ENCODE measurements at regions of chr2 and their contacts with region 1.

Region 1: DNA sequence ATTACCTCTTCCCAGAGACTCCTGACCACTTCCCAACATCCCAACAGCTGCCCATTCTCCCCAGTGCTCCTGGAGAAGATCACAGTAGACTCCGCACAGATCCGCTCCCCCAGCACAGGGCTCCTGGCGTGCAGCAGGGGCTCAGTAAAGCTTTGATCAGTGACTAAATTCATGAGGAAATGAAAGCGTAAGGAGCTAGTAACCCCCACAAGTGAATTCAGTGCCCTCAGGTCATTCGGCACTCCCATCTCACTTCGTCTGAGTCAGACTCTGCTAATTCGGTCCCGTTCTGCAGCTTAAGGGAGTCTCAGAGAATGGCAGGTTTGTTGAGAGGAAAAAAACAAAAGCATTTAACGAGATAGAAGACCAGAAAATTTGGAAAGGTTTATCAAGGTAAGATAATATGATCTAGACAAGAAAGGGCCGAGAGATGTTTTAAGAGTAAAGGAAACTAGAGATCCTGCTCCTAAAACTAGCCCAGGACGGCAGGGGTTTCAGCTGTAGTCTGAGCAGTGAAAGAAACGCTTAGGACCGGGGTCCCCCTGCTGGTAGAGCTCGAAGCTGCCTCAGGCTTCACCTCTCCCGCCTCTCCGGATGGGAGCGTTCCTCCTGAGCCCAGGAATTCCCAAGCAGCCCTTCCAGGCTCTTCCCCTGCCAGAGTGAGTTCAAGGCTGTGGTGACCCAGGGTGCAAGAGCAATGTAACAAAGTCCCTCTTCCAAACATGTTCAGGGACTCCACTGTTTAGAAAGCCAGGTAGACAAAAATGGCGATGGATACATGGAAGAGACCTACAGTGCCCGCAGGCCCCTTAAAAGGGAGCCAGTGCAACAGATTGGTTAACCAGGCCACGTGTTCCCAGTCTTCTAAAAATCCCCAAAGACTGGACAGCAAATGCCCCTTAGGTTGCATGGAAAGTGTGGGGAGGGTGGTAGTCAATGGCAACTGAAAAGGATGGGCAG is 127.3 kb downstream of the DNER start:
- DNase-seq: peak; percentile 81
- H3K4me3 ChIP-seq: peak overlapping the region in 1 of 2 experiments; percentile 51; a peak in 2 of 4 replicates
- H3K27ac ChIP-seq: no peak overlapping the region
- H3K4me1 ChIP-seq: peaks cover 0 to 8% of the 10 kb centered on the region in 2 experiments; a peak in 1 of 4 replicates
- H3K27me3 ChIP-seq: no peaks in the 10 kb centered on the region
- CTCF ChIP-seq: peak; percentile 93
- EP300 ChIP-seq: no peak
- RAD21 ChIP-seq: peak; percentile 93

Region 2: GRCh38 chr2:229273723-229274338 is 313.2 kb before region 1 on chr2:
- CTCF ChIA-PET with region 1: interaction called, 11 read pairs
- POLR2A ChIA-PET with region 1: no interaction called
- DNase-seq: peak; percentile 79
- H3K4me3 ChIP-seq: peak overlapping the region; percentile 29 to 47
- H3K27ac ChIP-seq: no peak overlapping the region
- H3K4me1 ChIP-seq: peaks cover 0 to 2% of the 10 kb centered on the region in 2 experiments; a peak in 1 of 4 replicates
- H3K27me3 ChIP-seq: no peaks in the 10 kb centered on the region
- CTCF ChIP-seq: peak; percentile 74
- EP300 ChIP-seq: no peak
- RAD21 ChIP-seq: peak; percentile 87

Region 3: DNA sequence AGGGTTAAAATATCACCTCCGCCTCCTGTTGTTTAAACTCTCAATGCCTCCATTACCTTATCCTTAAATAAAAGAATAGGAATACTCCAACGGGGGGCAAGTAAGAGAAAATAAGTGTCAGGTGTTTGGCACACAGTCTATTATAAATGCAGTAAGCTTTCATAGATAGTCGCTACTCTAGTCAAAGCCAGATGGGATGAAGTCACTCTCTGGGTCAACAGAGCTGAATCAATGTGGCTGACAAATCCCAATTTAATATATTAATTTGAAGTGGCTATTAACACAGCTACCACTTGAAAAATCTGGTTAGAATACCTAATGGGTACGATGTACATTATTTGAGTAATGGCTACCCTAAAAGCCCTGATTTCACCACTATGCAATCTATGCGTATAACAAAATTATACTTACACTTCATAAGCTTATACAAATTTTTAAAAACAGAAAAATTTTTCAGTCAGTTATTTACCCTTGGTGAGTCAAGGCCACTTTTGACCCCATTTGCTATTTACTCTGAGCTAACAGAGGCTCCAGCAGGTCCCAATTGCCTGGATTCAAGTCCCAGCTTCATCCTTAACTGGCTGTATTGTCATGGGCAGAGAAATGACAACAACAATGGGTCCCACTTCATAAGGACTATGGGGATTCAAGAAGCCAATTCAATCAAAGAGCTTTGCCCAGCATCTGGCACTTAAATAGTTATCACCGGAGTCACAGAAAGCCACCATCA is 148.4 kb before region 1 on chr2:
- CTCF ChIA-PET with region 1: interaction called, 40 read pairs
- POLR2A ChIA-PET with region 1: no interaction called
- DNase-seq: no peak
- H3K4me3 ChIP-seq: no peak overlapping the region
- H3K27ac ChIP-seq: no peak overlapping the region
- H3K4me1 ChIP-seq: no peaks in the 10 kb centered on the region
- H3K27me3 ChIP-seq: no peaks in the 10 kb centered on the region
- CTCF ChIP-seq: no peak
- EP300 ChIP-seq: no peak
- RAD21 ChIP-seq: no peak

Region 4: DNA sequence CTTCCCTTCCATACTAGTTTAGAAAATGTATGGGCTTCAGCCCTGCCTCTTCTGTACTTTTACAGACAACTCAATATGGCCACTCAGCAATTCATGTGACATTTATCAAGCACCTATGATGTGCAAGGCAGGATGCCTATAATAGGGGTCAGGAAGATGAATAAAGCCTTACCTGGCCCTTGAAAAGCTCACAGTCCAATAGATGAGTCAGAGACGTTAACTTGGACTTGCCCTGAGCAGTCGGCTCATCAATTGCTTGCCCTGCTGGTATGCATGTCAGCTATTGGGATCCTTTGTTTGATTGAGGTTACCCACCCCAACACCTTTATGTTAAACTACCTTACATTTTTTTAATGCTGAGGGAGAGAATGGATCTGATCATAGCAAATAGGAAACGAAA is 11.2 kb after region 1 on chr2:
- CTCF ChIA-PET with region 1: interaction called, 12 read pairs
- POLR2A ChIA-PET with region 1: no interaction called
- DNase-seq: no peak
- H3K4me3 ChIP-seq: no peak overlapping the region
- H3K27ac ChIP-seq: no peak overlapping the region
- H3K4me1 ChIP-seq: no peaks in the 10 kb centered on the region
- H3K27me3 ChIP-seq: no peaks in the 10 kb centered on the region
- CTCF ChIP-seq: no peak
- EP300 ChIP-seq: no peak
- RAD21 ChIP-seq: no peak

Region 5: DNA sequence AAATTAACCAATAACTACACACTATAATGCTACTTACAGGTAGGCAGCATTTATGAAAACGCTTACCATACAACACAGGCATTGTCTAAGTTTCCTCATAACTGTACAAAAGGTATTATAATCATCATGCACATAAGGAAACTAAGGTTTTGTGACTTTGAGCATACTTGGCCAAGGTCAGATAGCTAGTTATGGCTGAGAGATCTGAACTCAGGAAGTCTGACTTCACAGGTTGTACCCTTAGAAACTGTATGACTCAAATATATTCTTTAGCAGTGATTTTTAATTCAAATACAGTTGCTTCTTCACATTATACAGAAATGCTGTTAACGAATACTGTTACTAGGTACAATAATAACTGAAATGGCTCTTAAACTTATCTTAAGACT is 245.5 kb after region 1 on chr2:
- CTCF ChIA-PET with region 1: no interaction called
- POLR2A ChIA-PET with region 1: no interaction called
- DNase-seq: no peak
- H3K4me3 ChIP-seq: no peak overlapping the region
- H3K27ac ChIP-seq: no peak overlapping the region
- H3K4me1 ChIP-seq: peaks cover 0 to 3% of the 10 kb centered on the region in 2 experiments; a peak in 2 of 4 replicates
- H3K27me3 ChIP-seq: no peaks in the 10 kb centered on the region
- CTCF ChIP-seq: no peak
- EP300 ChIP-seq: no peak
- RAD21 ChIP-seq: no peak

Region 6: DNA sequence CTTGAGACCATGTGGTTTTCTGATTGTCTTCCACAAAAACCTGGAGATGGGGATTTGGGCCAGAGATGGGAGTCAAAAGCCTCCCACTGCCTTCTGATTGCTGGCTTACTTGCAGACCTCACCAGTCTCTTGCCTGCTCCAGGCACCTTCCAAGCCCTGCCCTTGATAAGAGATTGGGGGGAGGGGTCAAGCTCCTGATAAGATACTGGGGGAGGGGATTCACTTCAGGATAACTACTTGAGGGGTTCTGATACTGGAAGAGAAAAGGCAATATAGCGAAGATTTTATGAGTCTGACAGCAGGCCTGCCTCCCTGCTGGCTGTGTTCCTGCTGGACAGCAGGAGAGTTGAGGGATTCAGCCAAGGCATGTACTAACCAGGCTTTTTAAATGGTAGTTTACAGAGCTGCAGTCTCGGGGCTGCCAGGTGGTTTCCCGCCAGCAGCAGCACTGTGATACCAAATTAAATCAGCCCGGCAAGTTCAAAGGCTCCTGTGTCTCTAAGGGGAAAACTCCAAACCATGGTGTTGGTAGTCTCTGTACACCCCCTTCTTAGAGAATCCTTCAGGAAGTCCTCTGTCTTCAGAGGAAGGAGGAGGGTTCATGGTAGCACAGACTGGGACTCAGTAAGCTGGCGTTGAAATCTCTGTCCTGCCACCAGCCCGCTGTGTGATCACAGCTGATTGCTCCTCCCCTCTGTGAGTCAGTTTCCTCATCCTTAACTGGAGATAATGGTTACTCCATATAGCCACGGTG is 393.6 kb after region 1 on chr2:
- CTCF ChIA-PET with region 1: no interaction called
- POLR2A ChIA-PET with region 1: no interaction called
- DNase-seq: peak; percentile 55
- H3K4me3 ChIP-seq: no peak overlapping the region
- H3K27ac ChIP-seq: peak overlapping the region; percentile 14 to 64
- H3K4me1 ChIP-seq: peaks cover 6 to 12% of the 10 kb centered on the region in 2 experiments; a peak in 1 of 4 replicates
- H3K27me3 ChIP-seq: no peaks in the 10 kb centered on the region
- CTCF ChIP-seq: no peak
- EP300 ChIP-seq: no peak
- RAD21 ChIP-seq: no peak

Measured in SK-N-SH (cell line).